Ascending aorta (tissue), 2 donors: ENCODE measurements at regions of chr6 and their contacts with region 1.

Region 1: GRCh38 chr6:116561377-116562018 is 7.9 kb downstream of the CALHM4 start:
- DNase-seq: peak; percentile 31 to 88
- H3K4me3 ChIP-seq: peak overlapping the region in 1 of 2 donors; percentile 43
- H3K27ac ChIP-seq: no peak overlapping the region
- H3K4me1 ChIP-seq: no peaks in the 10 kb centered on the region
- H3K27me3 ChIP-seq: no peaks in the 10 kb centered on the region
- CTCF ChIP-seq: peak; percentile 75 to 91 (median 89)

Region 2: GRCh38 chr6:116217069-116217468 is 344.4 kb before region 1 on chr6:
- intact Hi-C with region 1: loop called (anchors 5 kb)
- DNase-seq: no peak
- H3K4me3 ChIP-seq: no peak overlapping the region
- H3K27ac ChIP-seq: no peak overlapping the region
- H3K4me1 ChIP-seq: no peaks in the 10 kb centered on the region
- H3K27me3 ChIP-seq: no peaks in the 10 kb centered on the region
- CTCF ChIP-seq: peak; percentile 15 to 56 (median 47)

Region 3: GRCh38 chr6:116268589-116269293 is 292.8 kb before region 1 on chr6:
- intact Hi-C with region 1: loop called (anchors 1 kb)
- DNase-seq: no peak
- H3K4me3 ChIP-seq: no peak overlapping the region
- H3K27ac ChIP-seq: no peak overlapping the region
- H3K4me1 ChIP-seq: no peaks in the 10 kb centered on the region
- H3K27me3 ChIP-seq: no peaks in the 10 kb centered on the region
- CTCF ChIP-seq: peak; percentile 69 to 71 (median 70)

Region 4: DNA sequence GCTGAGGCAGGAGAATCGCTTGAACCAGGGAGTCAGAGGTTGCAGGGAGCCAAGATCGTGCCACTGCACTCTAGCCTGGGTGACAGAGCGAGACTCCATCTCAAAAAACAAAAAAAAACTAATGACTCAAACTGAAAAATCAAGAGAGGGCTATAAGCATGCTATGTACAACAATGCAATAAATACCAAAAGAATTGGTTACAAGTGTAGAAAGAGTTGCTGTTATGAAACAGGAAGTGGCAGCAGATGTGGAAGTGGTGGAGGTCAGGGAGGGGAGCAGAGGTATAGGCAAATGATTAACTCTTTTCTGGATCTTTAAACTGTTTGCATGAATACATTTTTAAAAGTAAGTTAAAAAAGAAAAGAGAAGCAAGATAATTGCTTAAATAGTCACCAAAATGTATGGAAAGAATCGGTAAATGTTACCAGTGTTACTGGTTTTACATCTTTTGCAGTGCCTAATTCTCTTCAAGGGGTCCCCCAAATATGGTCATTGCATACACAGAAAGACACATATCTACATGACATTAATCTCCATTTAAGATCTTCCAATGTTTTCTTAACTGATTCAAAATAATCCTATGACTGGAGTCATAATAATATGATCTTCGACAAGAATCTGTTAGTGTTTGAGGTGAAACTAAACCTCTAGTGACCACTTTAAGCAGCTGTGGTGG is 85.4 kb before region 1 on chr6:
- intact Hi-C with region 1: no loop called
- DNase-seq: no peak
- H3K4me3 ChIP-seq: no peak overlapping the region
- H3K27ac ChIP-seq: no peak overlapping the region
- H3K4me1 ChIP-seq: no peaks in the 10 kb centered on the region
- H3K27me3 ChIP-seq: no peaks in the 10 kb centered on the region
- CTCF ChIP-seq: no peak